Activated CD4-positive, alpha-beta memory T cell treated with anti-CD3 and anti-CD28 coated beads for 36 hours (primary cell): ENCODE measurements at regions of chr18 and their contacts with region 1.

Region 1: DNA sequence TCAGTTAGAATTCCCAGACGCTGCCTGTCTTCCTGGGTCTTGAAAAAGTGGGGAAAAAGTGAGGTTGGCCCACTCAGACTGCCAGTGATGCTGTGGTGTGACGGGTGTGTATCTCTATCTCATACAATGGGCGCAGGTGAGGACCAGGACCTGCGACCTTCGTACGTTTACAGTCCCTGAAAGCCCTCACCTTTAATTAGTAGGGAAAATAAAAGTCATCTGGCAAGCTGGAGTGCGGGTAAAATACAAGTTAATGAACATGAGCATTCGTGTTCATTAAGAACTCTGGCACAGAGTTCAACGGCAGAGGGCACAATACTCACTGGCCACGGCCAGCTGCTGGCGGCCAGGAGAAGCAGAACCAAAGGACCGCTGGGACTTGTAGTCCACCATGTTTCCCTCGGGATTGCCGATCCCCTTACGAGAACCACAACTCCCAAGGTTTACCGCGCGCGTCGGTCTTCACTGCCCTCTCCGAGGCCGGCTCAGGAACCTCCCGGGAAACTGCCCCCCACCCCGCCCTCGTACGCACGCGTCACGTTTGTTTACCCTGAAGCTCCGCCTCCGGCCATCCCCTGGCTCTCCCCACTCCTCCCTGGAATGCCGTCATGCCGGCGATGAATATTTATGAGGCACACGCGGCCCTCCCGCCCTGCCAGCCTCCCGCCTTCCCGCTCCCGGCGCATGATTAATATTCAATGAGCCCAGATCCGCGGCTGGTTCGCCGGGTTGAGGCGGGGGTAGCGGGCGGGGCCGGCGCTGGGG is 488 bp upstream of the PHLPP1 start:
- DNase-seq: peak; percentile 97
- H3K4me3 Mint-ChIP-seq: peak overlapping the region; percentile 78
- H3K27ac Mint-ChIP-seq: peak overlapping the region; percentile 66
- H3K4me1 Mint-ChIP-seq: peaks cover 31% of the 10 kb centered on the region
- H3K27me3 Mint-ChIP-seq: peaks cover 2% of the 10 kb centered on the region

Region 2: DNA sequence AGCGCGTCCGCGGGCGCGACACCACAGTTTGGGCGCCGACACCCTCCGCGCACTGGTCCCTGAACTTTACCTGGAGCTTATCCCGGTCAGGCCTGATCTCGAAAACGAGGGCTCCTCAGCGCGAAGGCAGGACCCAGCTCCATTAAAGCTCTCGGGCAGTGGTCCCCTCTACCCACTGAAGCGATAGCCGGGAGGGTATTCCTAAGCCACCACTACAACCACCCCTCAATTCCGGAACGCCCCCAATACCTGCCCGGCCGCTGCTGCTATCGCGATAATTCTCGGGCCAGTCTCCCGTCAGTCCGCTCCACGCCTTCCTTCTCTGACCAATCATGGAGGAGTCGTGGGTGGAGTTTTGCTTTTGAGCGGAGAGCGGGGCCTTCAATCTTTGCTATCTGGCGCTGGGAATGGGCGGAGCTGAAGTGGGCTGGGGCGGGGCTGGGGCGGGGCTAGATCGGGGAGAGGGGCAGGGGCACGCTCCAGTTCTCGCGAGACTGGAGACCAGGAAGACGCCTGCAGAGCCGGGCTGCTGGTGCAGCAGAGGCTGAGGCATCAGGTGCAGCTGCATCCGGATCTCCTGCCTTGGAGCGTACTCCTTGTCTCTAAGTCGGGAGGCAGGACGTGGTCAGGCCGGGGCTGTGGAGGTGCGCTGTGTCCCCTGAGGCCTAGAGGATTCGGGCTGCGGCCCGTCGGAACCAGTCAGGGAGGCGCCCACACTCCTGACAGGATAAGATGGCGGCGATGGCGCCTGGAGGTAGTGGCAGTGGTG is 527.9 kb before region 1 on chr18 and contains the starts of genes PIGN and RELCH:
- CTCF ChIA-PET with region 1: no interaction called
- POLR2A ChIA-PET with region 1: no interaction called
- intact Hi-C with region 1: loop called (anchors 1 kb)
- DNase-seq: peak; percentile 97
- H3K4me3 Mint-ChIP-seq: peak within 1 kb of the TSS; percentile 99
- H3K27ac Mint-ChIP-seq: peak within 1 kb of the TSS; percentile 93
- H3K4me1 Mint-ChIP-seq: peaks cover 51% of the 10 kb centered on the region
- H3K27me3 Mint-ChIP-seq: no peaks in the 10 kb centered on the region
- total RNA-seq, gene PIGN: 26.2 to 27.8 TPM
- total RNA-seq, gene RELCH: 16.1 to 17.7 TPM

Region 3: DNA sequence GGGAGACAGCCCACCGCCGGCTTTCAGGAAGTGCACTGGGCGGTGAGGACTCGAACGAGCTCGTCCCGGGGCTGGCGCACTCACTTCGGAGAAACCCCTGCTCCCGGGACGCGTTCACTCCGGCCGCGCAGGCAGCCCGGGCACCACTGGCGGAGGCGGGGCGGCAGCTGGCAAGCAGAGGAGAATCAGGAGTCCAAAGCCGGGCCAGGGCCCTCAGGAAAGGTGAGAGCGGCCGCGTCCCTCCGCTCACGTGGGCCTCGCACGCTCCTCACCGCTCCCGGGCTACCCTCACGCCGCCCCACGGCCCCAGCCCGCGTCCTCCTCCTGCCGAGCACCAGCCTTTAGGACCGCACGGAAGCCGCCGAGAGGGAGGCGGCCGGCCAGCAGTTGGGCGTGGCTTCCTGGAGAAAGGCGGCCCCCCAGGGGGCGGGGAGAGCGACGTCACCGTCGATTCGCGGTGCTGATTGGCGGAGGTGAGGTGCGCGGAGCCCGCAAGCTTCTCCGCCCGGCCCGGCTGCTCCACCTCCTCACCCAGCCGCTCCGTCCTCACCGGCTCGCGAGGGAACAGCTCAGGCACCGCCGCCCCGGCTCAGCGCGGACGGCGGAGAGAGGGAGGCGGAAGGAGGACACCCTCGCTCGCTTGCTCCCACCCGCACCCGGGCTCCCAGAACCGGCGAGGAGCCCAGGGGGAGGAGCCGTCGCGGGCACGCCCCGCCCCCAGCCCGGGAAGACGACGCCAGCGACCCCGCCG is 192.2 kb before region 1 on chr18 and contains the start of gene ZCCHC2:
- CTCF ChIA-PET with region 1: no interaction called
- POLR2A ChIA-PET with region 1: no interaction called
- intact Hi-C with region 1: loop called (anchors 1 kb)
- DNase-seq: peak; percentile 99
- H3K4me3 Mint-ChIP-seq: peak within 1 kb of the TSS; percentile 94
- H3K27ac Mint-ChIP-seq: peak within 1 kb of the TSS; percentile 94
- H3K4me1 Mint-ChIP-seq: peaks cover 16% of the 10 kb centered on the region
- H3K27me3 Mint-ChIP-seq: no peaks in the 10 kb centered on the region
- total RNA-seq, gene ZCCHC2: 24.9 to 27.5 TPM

Region 4: DNA sequence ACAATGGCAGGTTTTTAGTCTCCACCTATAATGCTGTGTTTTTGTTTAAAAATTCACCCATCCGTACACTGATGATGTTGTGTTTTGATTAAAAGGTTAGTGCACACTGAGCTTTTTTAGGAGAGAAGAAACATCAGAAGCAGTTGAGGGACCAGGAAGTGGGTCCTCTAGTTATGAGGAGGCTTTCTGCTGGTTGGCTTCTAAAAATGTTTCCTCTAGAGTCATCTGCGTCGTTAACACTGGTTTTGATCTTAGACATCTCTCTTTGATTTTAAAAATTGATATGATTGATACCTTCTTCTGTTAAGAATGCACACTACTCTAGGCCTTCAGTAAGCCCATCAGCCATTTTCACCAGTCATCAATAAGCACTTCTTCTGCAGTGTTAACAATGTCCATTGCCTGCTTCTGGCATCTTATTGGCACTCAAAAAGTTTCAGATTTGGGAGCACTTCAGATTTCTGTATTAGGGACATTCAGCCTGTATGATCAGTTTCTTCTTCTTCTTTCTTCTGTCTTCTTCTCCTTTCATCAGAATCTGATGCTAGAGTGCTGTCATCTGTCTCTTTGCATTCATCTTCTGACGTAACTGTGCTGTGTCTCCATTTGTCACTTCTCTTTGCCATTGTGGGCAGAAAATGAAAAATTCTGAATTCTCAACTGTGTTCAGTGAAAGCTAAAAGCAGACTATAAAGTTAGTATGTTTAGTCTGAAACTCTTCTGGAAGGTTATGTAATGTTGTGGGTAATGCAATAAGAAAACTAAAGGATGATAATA is 56.8 kb after region 1 on chr18:
- CTCF ChIA-PET with region 1: interaction called, 5 read pairs
- POLR2A ChIA-PET with region 1: no interaction called
- intact Hi-C with region 1: loop called (anchors 2 kb)
- DNase-seq: no peak
- H3K4me3 Mint-ChIP-seq: no peak overlapping the region
- H3K27ac Mint-ChIP-seq: peak overlapping the region; percentile 43
- H3K4me1 Mint-ChIP-seq: peaks cover 20% of the 10 kb centered on the region
- H3K27me3 Mint-ChIP-seq: no peaks in the 10 kb centered on the region

Region 5: DNA sequence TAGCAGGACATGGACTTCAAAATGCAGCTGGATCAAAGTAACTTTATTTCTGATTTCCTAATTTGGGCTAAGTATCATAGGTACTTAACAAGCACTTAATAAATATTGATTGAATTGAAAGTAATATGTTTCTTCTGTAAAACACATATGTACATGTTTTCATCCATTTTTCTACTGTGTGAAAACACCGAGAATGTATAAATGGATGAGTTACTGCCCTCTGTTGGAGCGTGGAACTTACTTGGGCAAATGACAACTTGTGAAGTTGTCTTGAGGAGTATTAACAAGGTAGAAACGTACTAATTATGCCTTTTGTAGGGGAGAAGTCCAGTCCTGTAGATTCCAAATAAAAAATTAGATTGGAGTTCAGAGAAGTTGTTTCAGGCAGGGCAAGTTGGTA is 87.7 kb after region 1 on chr18:
- CTCF ChIA-PET with region 1: interaction called, 10 read pairs
- POLR2A ChIA-PET with region 1: no interaction called
- intact Hi-C with region 1: no loop called
- DNase-seq: no peak
- H3K4me3 Mint-ChIP-seq: no peak overlapping the region
- H3K27ac Mint-ChIP-seq: no peak overlapping the region
- H3K4me1 Mint-ChIP-seq: no peaks in the 10 kb centered on the region
- H3K27me3 Mint-ChIP-seq: no peaks in the 10 kb centered on the region

Region 6: DNA sequence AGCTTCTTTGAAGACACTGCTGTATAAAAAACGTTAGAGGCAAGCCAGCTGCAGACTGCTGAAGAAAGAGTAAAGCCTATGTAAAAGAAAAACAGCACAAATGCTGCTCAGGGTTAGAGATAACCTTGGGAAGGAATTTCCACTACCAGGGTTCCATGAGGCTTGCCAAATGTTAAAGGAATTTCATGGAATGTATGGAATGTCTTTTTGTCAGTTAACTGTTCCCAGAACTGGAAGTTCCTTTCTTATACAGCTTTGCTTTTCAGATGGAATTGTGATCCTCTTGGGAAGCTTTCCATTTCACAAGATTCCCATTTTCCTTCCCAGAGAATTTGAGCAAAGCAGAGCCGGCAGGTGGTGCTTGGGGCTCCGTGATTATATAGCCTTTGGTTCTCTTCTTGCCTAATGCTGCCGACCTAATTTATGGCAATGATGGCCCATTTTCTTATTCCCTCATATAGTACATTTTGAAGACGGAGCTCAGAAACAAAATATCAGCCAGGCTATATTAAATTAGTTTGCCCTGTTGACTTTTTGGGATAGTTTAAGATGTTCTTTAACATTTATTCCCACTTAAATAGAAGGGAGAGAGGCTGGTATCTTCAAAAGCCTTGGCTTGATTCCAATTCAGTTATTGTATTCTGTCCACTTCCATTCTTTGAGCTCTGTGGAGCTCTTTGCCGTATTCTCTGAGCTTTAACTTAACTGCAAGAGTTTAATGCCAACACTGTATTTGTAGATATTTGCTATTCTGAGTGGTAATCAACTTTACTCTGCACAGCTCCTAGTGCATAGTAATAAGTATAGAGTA is 162.8 kb after region 1 on chr18:
- CTCF ChIA-PET with region 1: no interaction called
- POLR2A ChIA-PET with region 1: no interaction called
- intact Hi-C with region 1: no loop called
- DNase-seq: no peak
- H3K4me3 Mint-ChIP-seq: no peak overlapping the region
- H3K27ac Mint-ChIP-seq: no peak overlapping the region
- H3K4me1 Mint-ChIP-seq: peaks cover 18% of the 10 kb centered on the region
- H3K27me3 Mint-ChIP-seq: no peaks in the 10 kb centered on the region

Region 7: DNA sequence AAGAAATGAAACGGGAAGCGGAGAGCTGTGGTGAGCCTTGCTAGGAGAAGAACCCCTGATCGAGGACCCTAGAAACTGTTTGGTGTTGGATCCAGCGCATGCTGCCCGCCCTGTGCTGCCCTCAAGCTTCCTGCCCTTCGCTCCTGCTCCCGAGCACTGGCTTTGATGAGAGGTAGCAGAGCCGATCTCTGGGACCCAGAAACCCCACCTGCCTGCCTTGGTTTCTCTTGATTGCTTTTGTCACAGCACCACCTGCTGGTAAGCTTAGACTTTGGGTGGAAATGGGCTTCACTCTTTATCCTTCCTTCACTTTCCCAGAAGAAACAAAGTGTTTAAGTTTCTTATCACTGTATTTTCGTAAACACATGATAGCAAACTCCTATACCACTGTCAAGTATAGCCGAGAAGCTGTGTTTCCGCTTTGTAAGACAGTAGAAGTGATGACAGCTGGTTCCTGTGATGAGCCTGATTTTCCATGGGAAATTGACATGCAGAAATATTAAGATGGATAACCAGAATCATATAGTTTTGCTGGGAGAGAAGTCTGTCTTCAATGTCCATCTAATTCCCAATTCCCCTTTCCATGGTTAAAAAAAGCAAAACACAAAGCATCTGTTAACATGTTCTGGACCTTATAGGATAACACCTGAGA is 267.9 kb after region 1 on chr18:
- CTCF ChIA-PET with region 1: interaction called, 32 read pairs
- POLR2A ChIA-PET with region 1: interaction called, 6 read pairs
- intact Hi-C with region 1: loop called (anchors 1 kb)
- DNase-seq: peak; percentile 66
- H3K4me3 Mint-ChIP-seq: no peak overlapping the region
- H3K27ac Mint-ChIP-seq: no peak overlapping the region
- H3K4me1 Mint-ChIP-seq: no peaks in the 10 kb centered on the region
- H3K27me3 Mint-ChIP-seq: no peaks in the 10 kb centered on the region